T-cell (primary cell): ENCODE measurements at regions of chr17 and their contacts with region 1.

Region 1: GRCh38 chr17:43891851-43892646 is 15.3 kb downstream of the MPP2 start:
- DNase-seq: no peak
- ATAC-seq: no peak
- H3K4me3 ChIP-seq: no peak overlapping the region
- H3K4me3 Mint-ChIP-seq: no peak overlapping the region
- H3K27ac ChIP-seq: no peak overlapping the region
- H3K27ac Mint-ChIP-seq: no peak overlapping the region
- H3K4me1 ChIP-seq: no peaks in the 10 kb centered on the region
- H3K4me1 Mint-ChIP-seq: no peaks in the 10 kb centered on the region
- H3K27me3 ChIP-seq: peaks cover 0 to 9% of the 10 kb centered on the region in 2 experiments
- H3K27me3 Mint-ChIP-seq: peaks cover 5 to 20% of the 10 kb centered on the region in 2 donors

Region 2: GRCh38 chr17:43927060-43927864 is 35.2 kb after region 1 on chr17:
- CTCF ChIA-PET with region 1: interaction called in 1 of 2 experiments, 5 read pairs
- POLR2A ChIA-PET with region 1: interaction called in 1 of 2 experiments, 11 read pairs
- DNase-seq: peak in 7 of 35 experiments; percentile 11 to 27 (median 24)
- ATAC-seq: peak; percentile 10 to 66 (median 42)
- H3K4me3 ChIP-seq: peak overlapping the region; percentile 13 to 62
- H3K4me3 Mint-ChIP-seq: peak overlapping the region; percentile 80 to 90 (median 85)
- H3K27ac ChIP-seq: peak overlapping the region; percentile 44
- H3K27ac Mint-ChIP-seq: peak overlapping the region; percentile 80 to 90
- H3K4me1 ChIP-seq: peaks cover 3 to 15% of the 10 kb centered on the region in 2 experiments
- H3K4me1 Mint-ChIP-seq: peaks cover 24 to 29% (median 25%) of the 10 kb centered on the region in 3 donors
- H3K27me3 ChIP-seq: peaks cover 0 to 13% of the 10 kb centered on the region in 2 experiments
- H3K27me3 Mint-ChIP-seq: peaks cover 0 to 18% of the 10 kb centered on the region in 2 donors

Region 3: GRCh38 chr17:43958953-43959352 is 66.9 kb after region 1 on chr17:
- CTCF ChIA-PET with region 1: no interaction called
- POLR2A ChIA-PET with region 1: no interaction called
- DNase-seq: no peak
- ATAC-seq: no peak
- H3K4me3 ChIP-seq: no peak overlapping the region
- H3K4me3 Mint-ChIP-seq: no peak overlapping the region
- H3K27ac ChIP-seq: no peak overlapping the region
- H3K27ac Mint-ChIP-seq: no peak overlapping the region
- H3K4me1 ChIP-seq: no peaks in the 10 kb centered on the region
- H3K4me1 Mint-ChIP-seq: no peaks in the 10 kb centered on the region
- H3K27me3 ChIP-seq: peaks cover 2 to 43% of the 10 kb centered on the region in 2 experiments
- H3K27me3 Mint-ChIP-seq: peaks cover 10 to 44% of the 10 kb centered on the region in 2 donors